SK-N-SH (cell line): ENCODE measurements at regions of chr9 and their contacts with region 1.

Region 1: GRCh38 chr9:19408693-19409400 is at the start of gene ACER2:
- DNase-seq: peak; percentile 99
- H3K4me3 ChIP-seq: peak within 1 kb of the TSS; percentile 65 to 77
- H3K27ac ChIP-seq: peak within 1 kb of the TSS; percentile 49 to 74; a peak in 3 of 4 replicates
- H3K4me1 ChIP-seq: peaks cover 0 to 11% of the 10 kb centered on the region in 2 experiments; a peak in 1 of 4 replicates
- H3K27me3 ChIP-seq: no peaks in the 10 kb centered on the region
- CTCF ChIP-seq: no peak
- EP300 ChIP-seq: 0 out of 4 replicates have a peak, but pooled peaks of 1 of the 2 experiments have one; percentile 7
- RAD21 ChIP-seq: no peak
- polyA plus RNA-seq, gene ACER2: 1.3 and 2.2 TPM in 2 replicates

Region 2: DNA sequence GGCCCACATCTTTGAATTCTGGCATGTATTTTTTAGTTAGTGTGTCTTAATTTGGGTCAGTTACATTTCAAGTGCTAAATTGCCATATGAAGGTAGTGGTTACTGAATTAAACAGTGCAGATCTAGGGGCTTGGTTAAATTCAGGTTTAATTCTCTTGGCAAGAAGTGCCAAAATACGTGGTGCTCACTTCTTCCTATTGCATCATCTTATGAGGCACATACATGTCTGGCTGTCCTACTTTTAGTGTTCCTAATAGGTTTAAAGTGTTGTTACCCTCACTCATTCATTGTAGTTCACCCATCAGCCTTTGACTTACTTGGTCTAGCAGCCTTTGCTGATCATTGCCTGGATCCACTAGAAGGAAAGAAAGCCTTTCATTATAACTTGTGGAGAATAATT is 88.4 kb before region 1 on chr9:
- CTCF ChIA-PET with region 1: no interaction called
- POLR2A ChIA-PET with region 1: no interaction called
- DNase-seq: no peak
- H3K4me3 ChIP-seq: no peak overlapping the region
- H3K27ac ChIP-seq: no peak overlapping the region
- H3K4me1 ChIP-seq: no peaks in the 10 kb centered on the region
- H3K27me3 ChIP-seq: no peaks in the 10 kb centered on the region
- CTCF ChIP-seq: no peak
- EP300 ChIP-seq: no peak
- RAD21 ChIP-seq: no peak

Region 3: GRCh38 chr9:19379697-19380046 is 29.2 kb before region 1 on chr9:
- CTCF ChIA-PET with region 1: no interaction called
- POLR2A ChIA-PET with region 1: interaction called, 10 read pairs
- DNase-seq: peak; percentile 54
- H3K4me3 ChIP-seq: peak overlapping the region; percentile 87 to 92
- H3K27ac ChIP-seq: peak overlapping the region; percentile 91 to 96
- H3K4me1 ChIP-seq: peaks cover 13 to 20% of the 10 kb centered on the region in 2 experiments
- H3K27me3 ChIP-seq: no peaks in the 10 kb centered on the region
- CTCF ChIP-seq: no peak
- EP300 ChIP-seq: no peak
- RAD21 ChIP-seq: no peak

Region 4: DNA sequence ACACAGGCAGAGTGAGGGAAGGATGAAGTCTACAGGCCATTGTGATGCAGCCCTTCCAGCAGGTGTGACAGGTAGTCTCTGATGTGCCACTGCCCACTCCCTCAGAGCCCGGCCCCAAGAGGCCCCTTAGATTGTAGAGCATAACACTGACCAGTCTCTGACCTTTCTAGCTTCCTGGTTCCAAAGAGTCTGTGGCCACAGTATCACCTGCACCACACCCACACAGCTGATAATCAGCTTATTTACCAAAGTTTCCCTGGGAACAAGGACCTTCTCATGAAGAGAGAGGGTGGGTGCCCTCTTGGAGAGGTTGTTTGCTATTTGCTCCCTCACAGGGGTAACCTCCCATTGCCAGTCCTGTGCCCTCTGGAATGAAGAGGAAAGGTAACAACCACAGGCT is 11.0 kb before region 1 on chr9:
- CTCF ChIA-PET with region 1: no interaction called
- POLR2A ChIA-PET with region 1: no interaction called
- DNase-seq: no peak
- H3K4me3 ChIP-seq: no peak overlapping the region
- H3K27ac ChIP-seq: no peak overlapping the region
- H3K4me1 ChIP-seq: no peaks in the 10 kb centered on the region
- H3K27me3 ChIP-seq: no peaks in the 10 kb centered on the region; the same call in 1 of the 2 replicates
- CTCF ChIP-seq: no peak
- EP300 ChIP-seq: no peak
- RAD21 ChIP-seq: no peak